ENCODE measurements at regions of chr9 and their contacts with region 1.

Region 1: GRCh38 chr9:13427587-13427986 is 148.1 kb upstream of the MPDZ start:
- DNase-seq: no peak

Region 2: DNA sequence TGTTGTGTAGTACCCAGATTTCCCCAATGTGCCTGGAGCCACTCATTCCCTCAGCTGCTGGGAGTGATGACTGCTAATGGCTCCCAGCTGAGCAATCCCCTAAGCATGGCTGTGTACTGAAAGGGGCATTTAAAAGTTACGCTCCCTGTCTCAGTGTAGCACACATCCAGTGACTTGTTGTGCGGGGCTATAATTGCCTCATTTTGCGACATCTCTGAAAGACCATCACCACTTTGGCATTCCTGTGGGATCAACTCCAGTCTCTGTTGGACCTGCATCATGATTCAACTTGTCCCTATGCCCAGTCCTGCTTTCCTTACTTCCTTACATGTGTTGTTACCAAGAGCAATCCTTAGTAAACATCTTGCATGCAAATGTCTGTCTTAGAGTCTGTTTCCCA is 53.1 kb after region 1 on chr9:
- intact Hi-C with region 1: no loop called
- DNase-seq: no peak

Region 3: GRCh38 chr9:13688994-13689600 is 261.5 kb after region 1 on chr9:
- intact Hi-C with region 1: loop called (anchors 2 kb)
- DNase-seq: peak in 4 of 10 donors; percentile 11 to 67 (median 48)

Region 4: DNA sequence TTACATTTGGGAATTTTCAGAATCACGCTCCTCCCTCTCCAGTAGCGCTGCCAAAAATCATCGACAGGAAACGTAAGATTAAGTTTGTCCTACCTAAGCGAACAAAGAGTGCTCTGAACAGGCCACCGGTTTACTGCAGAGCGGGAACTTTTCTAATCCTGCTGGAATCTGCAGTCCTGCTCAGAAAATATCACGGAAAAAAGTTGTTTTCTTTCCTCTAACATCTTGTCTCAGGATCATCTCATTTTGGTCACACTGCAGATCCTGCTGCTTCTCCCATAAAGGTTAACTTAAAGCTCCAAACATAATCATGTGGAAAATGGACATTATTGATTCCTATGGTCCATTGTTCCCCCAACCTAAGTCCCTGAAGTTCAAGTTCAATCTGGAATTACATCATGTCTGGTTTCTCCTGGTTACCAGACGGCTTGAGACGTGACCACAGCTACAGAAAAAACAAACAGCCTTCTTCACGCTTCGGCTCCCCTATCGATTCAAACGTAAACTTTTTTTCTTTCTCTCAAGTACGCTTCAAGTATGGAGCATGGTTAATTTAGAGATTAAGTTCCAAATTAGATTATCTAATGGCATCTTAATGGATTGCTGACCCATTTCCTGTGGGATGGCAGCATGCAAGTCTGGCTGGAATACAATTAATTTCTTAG is 668.8 kb after region 1 on chr9:
- intact Hi-C with region 1: loop called (anchors 10 kb)
- DNase-seq: no peak

Region 5: DNA sequence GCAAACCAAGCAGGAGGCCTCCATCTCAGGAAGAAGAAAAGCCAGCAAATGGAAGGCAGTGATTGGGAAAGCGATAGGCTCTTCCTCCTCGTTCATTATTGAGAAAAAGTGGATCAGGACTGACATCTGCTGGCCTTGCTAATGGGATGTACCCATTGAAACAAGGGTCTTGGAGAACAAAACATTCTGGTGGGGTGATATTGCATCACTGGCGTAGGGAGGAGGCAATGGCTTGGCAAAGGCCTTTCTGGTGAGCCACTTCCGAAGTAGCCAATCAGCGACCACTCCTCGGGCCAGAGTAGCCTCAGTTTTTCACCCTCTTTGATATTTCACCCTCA is 973.0 kb after region 1 on chr9:
- intact Hi-C with region 1: loop called (anchors 2 kb)
- DNase-seq: peak in 9 of 10 donors; percentile 23 to 90 (median 58)

Measured in posterior cingulate gyrus (tissue), 11 donors.